ENCODE measurements at regions of chr15 and their contacts with region 1.

Region 1: DNA sequence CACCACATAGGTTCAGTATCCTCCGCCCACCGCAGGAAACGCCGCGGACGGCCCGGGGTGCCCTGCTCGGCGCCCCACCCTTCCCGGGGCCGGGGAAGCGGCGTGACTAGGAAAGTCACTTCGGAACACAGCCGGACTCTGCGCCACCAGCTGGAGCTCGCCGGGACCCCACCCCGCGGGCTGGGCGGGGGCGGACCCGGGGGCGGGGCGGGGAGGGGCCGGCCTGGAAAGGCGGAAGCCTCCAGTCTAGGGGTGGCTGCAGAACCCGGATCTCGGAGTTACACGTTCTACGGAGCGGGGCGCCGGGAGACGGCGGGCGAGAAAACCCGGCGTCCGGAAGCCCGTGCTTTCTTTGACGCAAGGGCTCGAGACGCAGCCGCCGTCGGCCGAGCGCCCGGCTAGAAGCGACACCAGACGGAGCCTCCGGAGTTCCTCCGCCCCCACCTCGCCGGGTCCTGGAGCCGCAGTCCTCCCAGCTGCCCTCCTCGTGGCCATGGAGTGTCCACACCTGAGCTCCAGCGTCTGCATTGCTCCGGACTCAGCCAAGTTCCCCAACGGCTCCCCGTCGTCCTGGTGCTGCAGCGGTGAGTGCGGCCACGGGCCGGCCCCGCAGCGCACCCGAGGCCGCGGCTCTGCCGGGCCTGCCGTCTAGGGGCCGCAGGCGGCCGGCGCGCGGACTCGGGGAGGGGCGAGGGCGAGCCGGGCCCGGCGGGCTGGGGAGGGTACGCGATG is at the start of gene USP3:
- DNase-seq: peak; percentile 97
- ATAC-seq: peak; percentile 70
- H3K4me3 ChIP-seq: peak within 1 kb of the TSS; percentile 78 to 95 (median 82)
- H3K4me3 Mint-ChIP-seq: peak within 1 kb of the TSS; percentile 96
- H3K27ac ChIP-seq: peak within 1 kb of the TSS; percentile 99
- H3K27ac Mint-ChIP-seq: peak within 1 kb of the TSS; percentile 100
- H3K4me1 ChIP-seq: peaks cover 67 to 77% of the 10 kb centered on the region in 2 donors
- H3K4me1 Mint-ChIP-seq: peaks cover 80% of the 10 kb centered on the region
- H3K27me3 ChIP-seq: no peaks in the 10 kb centered on the region
- H3K27me3 Mint-ChIP-seq: no peaks in the 10 kb centered on the region
- CTCF ChIP-seq: peak; percentile 41
- total RNA-seq, gene USP3: 152 and 178 TPM in 2 replicates

Region 2: GRCh38 chr15:63466378-63467192 is 37.8 kb before region 1 on chr15:
- CTCF ChIA-PET with region 1: interaction called, 148 read pairs
- POLR2A ChIA-PET with region 1: interaction called, 39 read pairs
- intact Hi-C with region 1: loop called (anchors 1 kb)
- DNase-seq: peak; percentile 87
- ATAC-seq: peak; percentile 95
- H3K4me3 ChIP-seq: no peak overlapping the region
- H3K4me3 Mint-ChIP-seq: no peak overlapping the region
- H3K27ac ChIP-seq: no peak overlapping the region
- H3K27ac Mint-ChIP-seq: peak overlapping the region; percentile 47
- H3K4me1 ChIP-seq: peaks cover 4 to 8% of the 10 kb centered on the region in 2 donors
- H3K4me1 Mint-ChIP-seq: peaks cover 31% of the 10 kb centered on the region
- H3K27me3 ChIP-seq: no peaks in the 10 kb centered on the region
- H3K27me3 Mint-ChIP-seq: no peaks in the 10 kb centered on the region
- CTCF ChIP-seq: peak; percentile 81

Region 3: DNA sequence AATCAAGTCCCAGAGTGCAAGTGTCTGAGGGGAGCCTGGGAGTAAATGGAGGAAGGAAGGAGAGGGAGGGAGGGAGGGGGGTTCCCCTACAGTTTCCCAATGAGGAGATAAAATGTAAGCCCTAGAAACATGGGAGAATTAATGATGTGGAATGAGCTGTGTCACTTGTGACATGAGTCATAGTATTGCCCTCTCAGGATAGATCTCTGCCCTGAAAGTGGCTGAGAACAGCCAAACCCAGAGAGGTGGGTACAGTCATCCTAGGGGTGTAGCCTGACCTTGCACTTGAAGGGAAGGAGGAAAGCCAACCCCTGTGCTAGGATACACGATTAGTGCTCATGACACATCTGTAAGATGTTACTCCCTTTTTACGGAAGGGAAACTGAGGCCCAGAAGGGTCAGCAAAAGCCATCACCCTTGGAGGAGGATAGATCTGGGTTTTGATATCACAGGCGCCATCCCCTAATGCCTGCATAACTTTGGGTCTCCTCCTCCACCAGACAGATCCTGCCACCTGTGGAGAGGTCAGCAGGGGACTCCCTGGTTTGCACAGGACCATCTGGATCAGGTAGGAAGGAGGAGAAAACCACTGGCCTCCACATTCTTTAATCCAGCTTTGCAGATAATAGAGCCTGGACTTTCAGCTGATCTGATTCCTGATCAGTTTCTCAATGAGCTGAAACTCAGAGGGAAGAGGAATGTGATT is 23.2 kb before region 1 on chr15:
- CTCF ChIA-PET with region 1: interaction called, 115 read pairs
- POLR2A ChIA-PET with region 1: interaction called, 172 read pairs
- intact Hi-C with region 1: loop called (anchors 1 kb)
- DNase-seq: no peak
- ATAC-seq: peak; percentile 13
- H3K4me3 ChIP-seq: peak overlapping the region in 1 of 5 experiments; percentile 24
- H3K4me3 Mint-ChIP-seq: peak overlapping the region; percentile 79
- H3K27ac ChIP-seq: peak overlapping the region; percentile 95 to 98
- H3K27ac Mint-ChIP-seq: peak overlapping the region; percentile 98
- H3K4me1 ChIP-seq: peaks cover 75 to 82% of the 10 kb centered on the region in 2 donors
- H3K4me1 Mint-ChIP-seq: peaks cover 77% of the 10 kb centered on the region
- H3K27me3 ChIP-seq: no peaks in the 10 kb centered on the region
- H3K27me3 Mint-ChIP-seq: no peaks in the 10 kb centered on the region
- CTCF ChIP-seq: no peak

Region 4: GRCh38 chr15:63492541-63493077 is 11.8 kb before region 1 on chr15:
- CTCF ChIA-PET with region 1: interaction called, 142 read pairs
- POLR2A ChIA-PET with region 1: interaction called, 69 read pairs
- intact Hi-C with region 1: loop called (anchors 1 kb)
- DNase-seq: no peak
- ATAC-seq: no peak
- H3K4me3 ChIP-seq: no peak overlapping the region
- H3K4me3 Mint-ChIP-seq: no peak overlapping the region
- H3K27ac ChIP-seq: peak overlapping the region in 1 of 2 donors; percentile 20
- H3K27ac Mint-ChIP-seq: peak overlapping the region; percentile 78
- H3K4me1 ChIP-seq: peaks cover 51 to 64% of the 10 kb centered on the region in 2 donors
- H3K4me1 Mint-ChIP-seq: peaks cover 58% of the 10 kb centered on the region
- H3K27me3 ChIP-seq: no peaks in the 10 kb centered on the region
- H3K27me3 Mint-ChIP-seq: no peaks in the 10 kb centered on the region
- CTCF ChIP-seq: no peak

Region 5: GRCh38 chr15:63531586-63531985 is 27.2 kb after region 1 on chr15:
- CTCF ChIA-PET with region 1: interaction called, 16 read pairs
- POLR2A ChIA-PET with region 1: no interaction called
- intact Hi-C with region 1: no loop called
- DNase-seq: peak; percentile 35
- ATAC-seq: peak; percentile 44
- H3K4me3 ChIP-seq: no peak overlapping the region
- H3K4me3 Mint-ChIP-seq: peak overlapping the region; percentile 0
- H3K27ac ChIP-seq: peak overlapping the region in 1 of 2 donors; percentile 10
- H3K27ac Mint-ChIP-seq: no peak overlapping the region
- H3K4me1 ChIP-seq: peaks cover 42 to 60% of the 10 kb centered on the region in 2 donors
- H3K4me1 Mint-ChIP-seq: peaks cover 91% of the 10 kb centered on the region
- H3K27me3 ChIP-seq: no peaks in the 10 kb centered on the region
- H3K27me3 Mint-ChIP-seq: no peaks in the 10 kb centered on the region
- CTCF ChIP-seq: no peak

Region 6: GRCh38 chr15:63553388-63553791 is 49.0 kb after region 1 on chr15:
- CTCF ChIA-PET with region 1: interaction called, 10 read pairs
- POLR2A ChIA-PET with region 1: no interaction called
- intact Hi-C with region 1: no loop called
- DNase-seq: no peak
- ATAC-seq: no peak
- H3K4me3 ChIP-seq: no peak overlapping the region
- H3K4me3 Mint-ChIP-seq: no peak overlapping the region
- H3K27ac ChIP-seq: peak overlapping the region in 1 of 2 donors; percentile 56
- H3K27ac Mint-ChIP-seq: peak overlapping the region; percentile 74
- H3K4me1 ChIP-seq: no peaks in the 10 kb centered on the region
- H3K4me1 Mint-ChIP-seq: peaks cover 14% of the 10 kb centered on the region
- H3K27me3 ChIP-seq: no peaks in the 10 kb centered on the region
- H3K27me3 Mint-ChIP-seq: no peaks in the 10 kb centered on the region
- CTCF ChIP-seq: no peak